CD4-positive, alpha-beta T cell (primary cell): ENCODE measurements at regions of chr3 and their contacts with region 1.

Region 1: GRCh38 chr3:52056968-52057805 is 816 bp upstream of the DUSP7 start:
- DNase-seq: peak; percentile 99 to 100 (median 99)
- ATAC-seq: peak; percentile 83
- H3K4me3 ChIP-seq: peak overlapping the region; percentile 68
- H3K4me3 Mint-ChIP-seq: peak overlapping the region; percentile 94
- H3K27ac ChIP-seq: peak overlapping the region; percentile 76 to 88
- H3K27ac Mint-ChIP-seq: peak overlapping the region; percentile 98
- H3K4me1 ChIP-seq: peaks cover 45% of the 10 kb centered on the region
- H3K4me1 Mint-ChIP-seq: peaks cover 38% of the 10 kb centered on the region
- H3K27me3 ChIP-seq: no peaks in the 10 kb centered on the region
- H3K27me3 Mint-ChIP-seq: no peaks in the 10 kb centered on the region
- CTCF ChIP-seq: no peak

Region 2: DNA sequence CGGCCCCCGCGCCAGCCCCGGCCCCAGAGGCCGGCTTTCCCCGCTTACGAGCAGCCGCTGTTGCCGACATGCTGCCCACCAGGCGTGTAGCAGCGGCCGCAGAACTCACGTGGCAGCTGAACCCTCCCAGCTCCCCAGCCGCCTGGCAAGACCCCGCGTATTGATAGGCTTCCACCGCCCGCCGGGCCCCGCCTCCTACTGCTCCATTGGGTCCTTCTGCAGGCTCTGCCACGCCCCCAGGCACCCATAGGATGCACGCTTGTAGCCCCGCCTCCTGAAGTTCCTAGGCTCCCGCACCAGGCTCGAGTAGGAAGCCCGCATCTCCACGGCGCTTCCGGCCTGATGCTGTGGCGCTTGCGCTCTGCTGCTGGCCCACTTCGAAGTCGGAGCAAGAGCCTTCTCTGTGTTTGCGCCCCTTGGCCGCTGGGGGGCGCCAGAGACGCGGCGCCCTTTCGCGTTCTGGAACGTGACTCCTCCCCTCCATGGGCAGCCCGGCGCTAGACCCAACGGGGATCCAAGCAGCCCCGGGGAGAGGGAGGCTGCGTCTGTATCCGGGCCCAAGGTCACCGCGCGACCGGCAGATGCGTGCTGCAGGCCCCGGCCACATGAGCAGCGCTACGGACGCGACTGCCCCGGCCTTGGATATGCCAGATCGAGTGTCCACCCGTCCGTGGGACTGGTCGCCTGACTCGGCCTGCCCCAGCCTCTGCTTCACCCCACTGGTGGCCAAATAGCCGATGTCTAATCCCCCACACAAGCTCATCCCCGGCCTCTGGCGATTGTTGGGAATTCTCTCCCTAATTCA is 115.2 kb before region 1 on chr3 and contains the starts of genes PARP3 and RRP9:
- CTCF ChIA-PET with region 1: interaction called, 6 read pairs
- POLR2A ChIA-PET with region 1: interaction called, 4 read pairs
- intact Hi-C with region 1: loop called (anchors 2 kb)
- DNase-seq: peak; percentile 97 to 100 (median 99)
- ATAC-seq: peak; percentile 92
- H3K4me3 ChIP-seq: peak within 1 kb of the TSS; percentile 89
- H3K4me3 Mint-ChIP-seq: peak within 1 kb of the TSS; percentile 95
- H3K27ac ChIP-seq: peak within 1 kb of the TSS; percentile 39 to 71
- H3K27ac Mint-ChIP-seq: peak within 1 kb of the TSS; percentile 81
- H3K4me1 ChIP-seq: peaks cover 32% of the 10 kb centered on the region
- H3K4me1 Mint-ChIP-seq: peaks cover 36% of the 10 kb centered on the region
- H3K27me3 ChIP-seq: no peaks in the 10 kb centered on the region
- H3K27me3 Mint-ChIP-seq: no peaks in the 10 kb centered on the region
- CTCF ChIP-seq: peak; percentile 95
- total RNA-seq, gene PARP3: 5.8 to 6.4 TPM
- total RNA-seq, gene RRP9: 6.4 to 7.6 TPM

Region 3: GRCh38 chr3:51982782-51983577 is 74.2 kb before region 1 on chr3 and contains the start of gene ACY1:
- CTCF ChIA-PET with region 1: interaction called, 6 read pairs
- POLR2A ChIA-PET with region 1: interaction called, 13 read pairs
- intact Hi-C with region 1: no loop called
- DNase-seq: peak in 13 of 14 experiments; percentile 36 to 85 (median 56)
- ATAC-seq: peak; percentile 85
- H3K4me3 ChIP-seq: peak within 1 kb of the TSS; percentile 75
- H3K4me3 Mint-ChIP-seq: peak within 1 kb of the TSS; percentile 93
- H3K27ac ChIP-seq: peak within 1 kb of the TSS; percentile 69 to 85
- H3K27ac Mint-ChIP-seq: peak within 1 kb of the TSS; percentile 81
- H3K4me1 ChIP-seq: peaks cover 42% of the 10 kb centered on the region
- H3K4me1 Mint-ChIP-seq: peaks cover 20% of the 10 kb centered on the region
- H3K27me3 ChIP-seq: no peaks in the 10 kb centered on the region
- H3K27me3 Mint-ChIP-seq: no peaks in the 10 kb centered on the region
- CTCF ChIP-seq: peak; percentile 3
- total RNA-seq, gene ACY1: 4.9 TPM

Region 4: GRCh38 chr3:52001443-52001974 is 55.7 kb before region 1 on chr3:
- CTCF ChIA-PET with region 1: interaction called, 6 read pairs
- POLR2A ChIA-PET with region 1: interaction called, 12 read pairs
- intact Hi-C with region 1: loop called (anchors 2 kb)
- DNase-seq: peak; percentile 78 to 92 (median 82)
- ATAC-seq: peak; percentile 99
- H3K4me3 ChIP-seq: no peak overlapping the region
- H3K4me3 Mint-ChIP-seq: peak overlapping the region; percentile 25
- H3K27ac ChIP-seq: no peak overlapping the region
- H3K27ac Mint-ChIP-seq: peak overlapping the region; percentile 20
- H3K4me1 ChIP-seq: peaks cover 22% of the 10 kb centered on the region
- H3K4me1 Mint-ChIP-seq: peaks cover 17% of the 10 kb centered on the region
- H3K27me3 ChIP-seq: no peaks in the 10 kb centered on the region
- H3K27me3 Mint-ChIP-seq: no peaks in the 10 kb centered on the region
- CTCF ChIP-seq: peak; percentile 96

Region 5: DNA sequence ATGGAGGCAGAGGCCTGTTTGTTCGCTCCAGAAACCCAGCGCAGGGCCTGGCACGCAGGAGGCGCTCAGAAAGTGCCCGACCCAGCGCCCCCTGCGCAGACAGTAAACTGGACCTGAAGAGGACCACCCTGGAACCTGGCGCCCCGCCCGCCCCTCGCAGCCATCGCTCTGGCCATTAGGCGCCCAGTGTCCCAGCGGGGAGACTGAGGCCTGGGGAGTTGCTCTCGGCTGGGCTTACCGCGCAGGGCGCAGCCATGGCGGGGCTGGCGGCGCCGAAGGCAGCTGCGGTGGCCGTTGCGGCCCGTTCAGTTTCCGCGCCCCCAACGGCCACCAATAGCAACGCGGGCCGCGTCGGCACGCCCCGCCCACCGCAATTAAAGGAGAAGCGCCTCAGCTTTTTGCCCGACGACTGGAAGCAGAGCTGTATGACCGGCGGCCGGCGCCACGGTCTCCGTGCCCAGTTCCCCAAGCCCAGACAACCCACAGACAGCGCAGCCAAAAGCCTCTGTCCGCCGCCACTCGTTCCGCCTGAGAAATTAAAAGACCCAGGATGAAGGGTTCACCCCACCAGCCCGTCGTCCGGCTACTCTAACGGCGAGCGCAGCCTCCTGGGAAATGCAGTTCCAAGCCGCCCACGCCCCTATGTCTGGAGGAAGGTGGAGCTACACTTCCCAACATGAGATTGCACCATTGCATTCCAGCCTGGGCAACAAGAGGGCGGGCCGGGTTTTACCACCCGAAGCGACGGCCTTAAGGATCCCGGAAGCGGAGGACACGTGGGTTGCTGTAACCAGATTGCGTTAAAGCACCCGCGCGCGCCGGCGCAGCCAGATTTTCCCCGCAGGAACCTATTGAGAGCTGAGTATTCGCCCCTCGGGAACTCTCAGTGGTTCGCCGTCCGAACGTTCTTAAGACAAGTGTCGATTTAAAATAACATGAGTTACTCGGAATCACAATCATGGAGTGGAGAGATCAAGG is 97.2 kb after region 1 on chr3 and contains the start of gene POC1A:
- CTCF ChIA-PET with region 1: interaction called, 6 read pairs
- POLR2A ChIA-PET with region 1: interaction called, 34 read pairs
- intact Hi-C with region 1: loop called (anchors 1 kb)
- DNase-seq: peak; percentile 66 to 94 (median 78)
- ATAC-seq: peak; percentile 87
- H3K4me3 ChIP-seq: peak within 1 kb of the TSS; percentile 87
- H3K4me3 Mint-ChIP-seq: peak within 1 kb of the TSS; percentile 99
- H3K27ac ChIP-seq: peak within 1 kb of the TSS; percentile 73 to 74
- H3K27ac Mint-ChIP-seq: peak within 1 kb of the TSS; percentile 96
- H3K4me1 ChIP-seq: peaks cover 17% of the 10 kb centered on the region
- H3K4me1 Mint-ChIP-seq: peaks cover 12% of the 10 kb centered on the region
- H3K27me3 ChIP-seq: no peaks in the 10 kb centered on the region
- H3K27me3 Mint-ChIP-seq: no peaks in the 10 kb centered on the region
- CTCF ChIP-seq: peak; percentile 9
- total RNA-seq, gene POC1A: 0.22 to 0.39 TPM

Region 6: DNA sequence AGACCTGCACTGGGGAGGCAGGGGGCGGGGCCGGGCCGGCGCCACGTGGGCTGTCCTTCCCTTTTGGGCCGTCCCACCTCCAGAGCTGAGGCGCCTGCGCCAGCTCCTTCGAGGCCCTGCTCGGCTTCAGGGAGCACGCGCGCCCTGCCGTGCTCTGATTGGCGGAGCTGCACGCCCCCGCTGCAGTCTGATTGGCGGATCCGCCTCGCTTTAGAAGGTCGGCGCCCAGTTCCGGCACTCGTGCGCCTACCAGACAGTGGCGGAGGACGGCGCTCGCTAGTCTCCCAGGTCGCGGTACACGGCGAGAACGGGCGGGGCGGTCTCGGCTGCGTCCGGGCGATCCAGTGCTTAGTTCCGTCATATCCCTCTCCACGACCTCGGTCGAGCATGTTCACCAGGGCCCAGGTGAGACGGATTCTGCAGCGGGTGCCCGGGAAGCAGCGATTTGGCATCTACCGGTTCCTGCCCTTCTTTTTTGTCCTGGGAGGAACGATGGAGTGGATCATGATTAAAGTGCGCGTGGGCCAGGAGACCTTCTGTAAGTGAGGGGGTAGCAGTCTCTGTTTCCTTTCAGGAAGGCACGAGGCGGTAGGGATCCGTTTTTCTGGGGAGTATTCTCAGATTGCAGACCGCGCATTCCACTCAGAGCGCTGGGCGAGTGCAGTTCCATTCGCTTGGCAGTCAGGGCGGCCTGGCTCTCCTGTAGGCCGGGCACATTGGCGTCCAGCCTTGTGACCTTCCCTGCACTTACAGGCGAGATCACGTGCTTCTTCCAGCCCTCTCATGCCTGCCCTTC is 479.4 kb after region 1 on chr3 and contains the start of gene UQCC5:
- CTCF ChIA-PET with region 1: no interaction called
- POLR2A ChIA-PET with region 1: interaction called, 4 read pairs
- intact Hi-C with region 1: loop called in 1 of 2 experiments (anchors 5 kb)
- DNase-seq: peak; percentile 93 to 99 (median 96)
- ATAC-seq: peak; percentile 89
- H3K4me3 ChIP-seq: peak within 1 kb of the TSS; percentile 92
- H3K4me3 Mint-ChIP-seq: peak within 1 kb of the TSS; percentile 99
- H3K27ac ChIP-seq: peak within 1 kb of the TSS; percentile 71 to 83
- H3K27ac Mint-ChIP-seq: peak within 1 kb of the TSS; percentile 95
- H3K4me1 ChIP-seq: peaks cover 64% of the 10 kb centered on the region
- H3K4me1 Mint-ChIP-seq: peaks cover 60% of the 10 kb centered on the region
- H3K27me3 ChIP-seq: peaks cover 0 to 3% of the 10 kb centered on the region in 2 experiments
- H3K27me3 Mint-ChIP-seq: no peaks in the 10 kb centered on the region
- CTCF ChIP-seq: peak; percentile 22
- total RNA-seq, gene UQCC5: 2.8 to 8.3 TPM